Activated CD4-positive, alpha-beta T cell treated with anti-CD3 and anti-CD28 coated beads, Interleukin-2, amount 10 ng/mL, durations not matched to agents 24 days and 14 days (primary cell): ENCODE measurements at regions of chr7 and their contacts with region 1.

Region 1: DNA sequence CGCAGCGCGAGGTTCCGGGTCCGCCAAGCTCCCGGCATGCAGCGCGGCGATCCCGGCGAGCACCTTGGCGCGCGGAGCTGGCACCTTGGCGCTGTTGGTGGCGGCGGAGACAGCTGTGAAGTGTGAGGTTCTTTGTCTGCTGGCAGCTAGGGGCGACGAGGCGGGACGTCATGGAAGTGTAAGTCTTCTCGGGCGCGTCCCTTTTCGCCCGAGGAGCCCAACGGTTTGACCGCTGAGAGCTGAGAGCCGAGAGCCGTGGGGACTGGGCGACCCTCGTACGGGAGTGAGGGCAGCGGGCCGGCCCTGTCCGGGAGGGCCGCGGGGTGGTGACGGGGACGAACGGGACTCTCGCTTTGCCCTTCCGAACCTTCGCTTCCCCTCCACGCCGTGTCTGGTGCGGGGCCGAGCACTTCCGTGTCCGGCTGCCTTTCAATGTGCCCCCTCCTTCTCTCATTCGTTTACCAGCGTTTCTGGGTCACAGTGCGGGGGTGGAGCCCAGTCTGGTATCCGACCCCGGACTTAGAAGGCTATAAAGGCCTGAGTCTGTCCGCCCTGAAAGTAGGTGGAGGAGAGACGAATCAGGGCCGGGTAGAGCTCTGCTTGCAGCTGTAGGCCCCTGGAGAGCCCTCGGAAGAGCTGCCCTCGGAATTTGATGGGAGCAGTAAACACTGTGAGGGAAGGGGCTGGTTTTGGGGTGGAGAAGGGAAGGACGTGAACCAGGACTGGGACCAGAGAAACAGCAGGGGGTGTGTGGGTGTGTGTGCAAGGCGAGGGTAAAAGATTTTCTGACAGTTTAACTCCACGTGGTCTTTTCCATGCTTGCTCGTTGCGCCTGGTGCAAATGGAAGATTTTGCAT is at the start of gene CRCP:
- DNase-seq: peak; percentile 95
- H3K4me3 Mint-ChIP-seq: peak within 1 kb of the TSS; percentile 100
- H3K27ac Mint-ChIP-seq: peak within 1 kb of the TSS; percentile 98
- H3K4me1 Mint-ChIP-seq: peaks cover 37% of the 10 kb centered on the region
- H3K27me3 Mint-ChIP-seq: no peaks in the 10 kb centered on the region
- total RNA-seq, gene CRCP: 37.2 and 41.9 TPM in 2 replicates

Region 2: DNA sequence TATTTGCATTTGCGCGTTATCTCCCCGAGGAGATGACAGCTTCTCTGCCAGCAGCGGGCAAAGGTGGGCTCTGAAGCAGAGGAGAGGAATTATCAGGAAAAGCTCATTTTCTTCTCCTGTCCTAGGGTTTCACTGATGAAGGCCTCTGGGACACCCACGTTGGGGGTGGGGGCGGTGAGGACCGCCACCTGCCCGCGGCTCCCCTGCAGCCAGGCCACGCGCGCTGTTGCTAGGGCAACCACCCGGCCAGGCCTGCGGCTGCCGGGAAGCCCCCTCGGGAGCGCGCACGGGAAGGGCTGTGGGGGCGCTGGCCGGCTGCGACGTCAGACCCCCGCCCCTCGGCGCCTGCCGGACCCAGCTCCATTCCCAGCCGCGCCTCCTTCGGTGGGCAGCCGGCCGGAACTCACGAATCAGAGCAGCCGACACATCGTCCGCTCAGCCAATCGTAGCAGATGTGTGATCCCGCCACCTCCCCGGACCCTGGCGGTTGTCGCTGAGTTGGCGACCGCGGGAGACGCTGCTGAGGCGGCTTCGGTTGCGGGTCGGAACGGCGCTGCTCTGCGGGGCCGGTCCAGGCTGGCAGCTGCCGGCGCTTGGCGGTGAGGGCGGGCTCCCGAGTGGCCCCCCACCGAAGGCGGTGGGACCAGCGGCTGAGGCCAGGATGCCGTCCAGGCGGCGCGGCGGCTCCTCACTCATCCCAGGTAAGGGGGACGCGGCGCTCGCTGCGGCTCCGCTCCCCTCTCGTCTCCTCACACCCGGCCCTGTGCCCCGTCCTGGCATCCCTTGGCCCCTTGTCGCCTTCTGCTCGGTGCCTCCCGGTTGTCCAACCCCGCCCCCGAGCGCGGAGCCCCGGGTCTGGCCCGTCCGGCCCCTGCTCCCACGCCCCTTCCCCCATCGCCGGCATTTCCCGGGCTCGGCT is 90.1 kb after region 1 on chr7 and contains the start of gene TPST1:
- intact Hi-C with region 1: loop called (anchors 10 kb)
- DNase-seq: peak; percentile 94
- H3K4me3 Mint-ChIP-seq: peak within 1 kb of the TSS; percentile 85
- H3K27ac Mint-ChIP-seq: peak within 1 kb of the TSS; percentile 26
- H3K4me1 Mint-ChIP-seq: peaks cover 27% of the 10 kb centered on the region
- H3K27me3 Mint-ChIP-seq: peaks cover 39% of the 10 kb centered on the region
- total RNA-seq, gene TPST1: 1.1 and 2.1 TPM in 2 replicates